CD8-positive, alpha-beta memory T cell (primary cell): ENCODE measurements at regions of chr17 and their contacts with region 1.

Region 1: GRCh38 chr17:48878918-48879898 is 13.4 kb upstream of the ATP5MC1 start:
- DNase-seq: peak; percentile 28 to 72 (median 59)
- H3K4me3 ChIP-seq: no peak overlapping the region
- H3K4me3 Mint-ChIP-seq: no peak overlapping the region
- H3K27ac ChIP-seq: no peak overlapping the region
- H3K27ac Mint-ChIP-seq: no peak overlapping the region
- H3K4me1 ChIP-seq: no peaks in the 10 kb centered on the region
- H3K4me1 Mint-ChIP-seq: peaks cover 0 to 7% (median 3%) of the 10 kb centered on the region in 3 donors
- H3K27me3 ChIP-seq: peaks cover 4% of the 10 kb centered on the region
- H3K27me3 Mint-ChIP-seq: peaks cover 8 to 9% of the 10 kb centered on the region in 2 donors

Region 2: DNA sequence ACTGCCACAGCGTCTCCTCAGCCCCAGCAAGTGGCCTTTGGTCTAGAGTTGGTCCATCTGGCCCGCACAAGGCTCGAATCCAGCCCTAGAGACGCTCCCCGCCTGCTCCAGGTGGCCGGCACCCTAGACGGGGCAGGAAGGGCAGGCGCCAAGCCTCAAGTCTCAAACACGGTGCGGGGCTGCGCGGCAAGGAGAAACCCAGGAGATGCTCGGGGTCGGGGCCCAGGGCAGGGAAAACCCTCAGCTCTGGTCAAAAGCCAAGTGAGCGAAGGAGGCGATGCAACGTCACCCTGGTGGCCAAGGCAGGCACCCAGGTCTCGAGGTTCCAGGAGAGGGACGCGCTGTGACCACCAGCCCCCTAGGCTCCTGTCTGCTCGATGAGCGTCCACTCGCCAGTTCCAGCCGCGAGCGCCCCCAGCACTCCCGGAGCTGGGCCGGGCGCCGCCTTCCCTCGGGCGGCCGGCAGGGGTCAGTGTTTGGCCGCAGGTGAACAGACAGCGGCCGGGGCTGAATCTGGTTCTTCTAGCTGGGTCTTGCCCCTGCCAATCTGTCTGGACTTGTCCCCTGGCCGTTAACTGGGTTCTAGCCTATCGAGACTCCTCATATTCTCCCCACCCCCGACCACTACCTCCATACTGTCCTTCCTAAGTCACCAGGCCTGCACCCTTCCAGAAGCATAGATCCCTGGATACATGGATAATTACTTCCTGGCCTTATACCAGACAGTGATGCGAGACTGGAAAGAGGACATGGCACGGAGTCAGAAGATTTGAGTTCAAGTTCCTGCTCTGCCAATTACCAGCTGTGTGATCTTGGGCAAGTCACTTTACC is 200.9 kb before region 1 on chr17:
- CTCF ChIA-PET with region 1: interaction called, 42 read pairs
- POLR2A ChIA-PET with region 1: interaction called, 3 read pairs
- DNase-seq: peak; percentile 55 to 70 (median 63)
- H3K4me3 ChIP-seq: no peak overlapping the region
- H3K4me3 Mint-ChIP-seq: peak overlapping the region in 4 of 7 donors; percentile 20 to 56 (median 46)
- H3K27ac ChIP-seq: no peak overlapping the region
- H3K27ac Mint-ChIP-seq: peak overlapping the region in 1 of 8 donors; percentile 10
- H3K4me1 ChIP-seq: peaks cover 3% of the 10 kb centered on the region
- H3K4me1 Mint-ChIP-seq: peaks cover 0 to 7% (median 0%) of the 10 kb centered on the region in 3 donors
- H3K27me3 ChIP-seq: peaks cover 9% of the 10 kb centered on the region
- H3K27me3 Mint-ChIP-seq: peaks cover 30 to 45% of the 10 kb centered on the region in 2 donors

Region 3: GRCh38 chr17:48799069-48799723 is 80.0 kb before region 1 on chr17:
- CTCF ChIA-PET with region 1: interaction called, 68 read pairs
- POLR2A ChIA-PET with region 1: interaction called, 11 read pairs
- DNase-seq: no peak
- H3K4me3 ChIP-seq: no peak overlapping the region
- H3K4me3 Mint-ChIP-seq: no peak overlapping the region
- H3K27ac ChIP-seq: no peak overlapping the region
- H3K27ac Mint-ChIP-seq: no peak overlapping the region
- H3K4me1 ChIP-seq: no peaks in the 10 kb centered on the region
- H3K4me1 Mint-ChIP-seq: no peaks in the 10 kb centered on the region
- H3K27me3 ChIP-seq: peaks cover 10% of the 10 kb centered on the region
- H3K27me3 Mint-ChIP-seq: peaks cover 18 to 40% of the 10 kb centered on the region in 2 donors

Region 4: DNA sequence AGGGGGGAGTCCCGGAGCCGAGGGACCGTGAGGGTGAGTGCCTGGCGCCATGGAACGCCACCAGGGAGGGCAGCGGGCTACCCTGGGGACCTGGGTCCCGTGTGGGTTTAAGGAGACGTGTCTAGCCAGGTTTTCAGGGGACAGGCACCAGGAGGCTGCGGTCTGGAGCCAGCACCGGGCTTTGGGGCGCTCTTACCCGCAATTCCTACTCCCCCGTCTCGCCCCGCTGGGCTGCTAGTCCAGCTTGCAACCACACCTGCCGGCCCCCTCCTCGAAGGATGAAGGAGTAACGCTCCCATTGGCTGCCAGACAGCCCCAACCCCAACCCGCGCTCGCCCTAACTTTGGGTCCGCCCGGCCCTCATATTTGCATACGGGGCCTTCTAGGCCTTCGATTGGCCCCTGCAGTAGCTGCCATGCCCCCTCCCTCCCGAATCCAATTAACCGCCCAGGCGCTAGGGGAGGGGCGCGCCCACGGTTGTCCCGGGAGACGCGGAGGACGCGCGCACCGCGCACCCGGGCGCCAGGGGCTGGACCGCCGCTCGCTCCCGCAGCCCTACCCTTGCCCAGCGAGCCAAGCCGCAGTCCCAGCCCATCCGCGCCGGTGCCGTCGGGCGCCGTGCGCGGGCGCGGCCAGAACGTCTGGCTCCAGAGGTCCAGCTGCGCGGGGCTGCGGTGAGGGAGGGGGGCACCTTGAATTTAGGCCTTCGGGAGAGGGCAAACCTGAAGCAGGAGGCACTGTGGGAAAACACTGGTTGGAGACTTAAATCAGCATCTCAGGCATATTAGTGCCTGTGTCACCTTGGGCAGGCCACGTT is 62.2 kb before region 1 on chr17 and contains the start of gene TTLL6:
- CTCF ChIA-PET with region 1: interaction called, 214 read pairs
- POLR2A ChIA-PET with region 1: interaction called, 3 read pairs
- DNase-seq: peak; percentile 67 to 85 (median 75)
- H3K4me3 ChIP-seq: peak within 1 kb of the TSS; percentile 69
- H3K4me3 Mint-ChIP-seq: peak within 1 kb of the TSS; percentile 29 to 89 (median 76)
- H3K27ac ChIP-seq: no peak within 1 kb of the TSS
- H3K27ac Mint-ChIP-seq: peak within 1 kb of the TSS in 3 of 8 donors; percentile 63 to 90 (median 68)
- H3K4me1 ChIP-seq: peaks cover 13% of the 10 kb centered on the region
- H3K4me1 Mint-ChIP-seq: peaks cover 13 to 24% (median 14%) of the 10 kb centered on the region in 3 donors
- H3K27me3 ChIP-seq: peaks cover 20% of the 10 kb centered on the region
- H3K27me3 Mint-ChIP-seq: peaks cover 30 to 60% of the 10 kb centered on the region in 2 donors
- total RNA-seq, gene TTLL6: not detected

Region 5: GRCh38 chr17:48892940-48893645 is 13.9 kb after region 1 on chr17:
- CTCF ChIA-PET with region 1: interaction called, 15 read pairs
- POLR2A ChIA-PET with region 1: no interaction called
- DNase-seq: peak in 1 of 5 donors; percentile 52
- H3K4me3 ChIP-seq: peak overlapping the region; percentile 71
- H3K4me3 Mint-ChIP-seq: peak overlapping the region; percentile 77 to 94 (median 92)
- H3K27ac ChIP-seq: peak overlapping the region; percentile 84
- H3K27ac Mint-ChIP-seq: peak overlapping the region; percentile 85 to 99 (median 98)
- H3K4me1 ChIP-seq: peaks cover 20% of the 10 kb centered on the region
- H3K4me1 Mint-ChIP-seq: peaks cover 24 to 31% (median 29%) of the 10 kb centered on the region in 3 donors
- H3K27me3 ChIP-seq: no peaks in the 10 kb centered on the region
- H3K27me3 Mint-ChIP-seq: no peaks in the 10 kb centered on the region

Region 6: DNA sequence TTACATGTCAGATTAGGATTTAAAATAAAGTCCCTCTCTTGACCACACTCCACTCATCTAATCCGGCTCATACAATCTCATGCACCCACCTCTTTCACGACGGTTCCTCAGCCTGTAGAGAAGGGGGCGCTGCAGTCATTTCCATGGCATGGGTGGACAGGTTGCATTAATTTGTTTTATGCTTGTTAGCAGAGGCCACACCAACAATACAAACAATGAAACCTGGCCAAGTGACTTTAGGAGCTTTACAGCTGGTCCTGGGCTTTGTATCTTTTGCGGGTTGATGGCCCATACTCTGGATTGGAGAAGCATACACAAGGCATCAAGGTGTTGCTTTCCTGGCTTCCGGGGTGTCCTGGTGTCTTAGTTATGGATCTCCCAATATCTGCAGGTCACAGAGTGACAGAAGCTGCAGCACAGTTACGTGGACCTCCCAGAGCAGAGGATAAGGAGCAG is 75.1 kb after region 1 on chr17:
- CTCF ChIA-PET with region 1: no interaction called
- POLR2A ChIA-PET with region 1: no interaction called
- DNase-seq: no peak
- H3K4me3 ChIP-seq: no peak overlapping the region
- H3K4me3 Mint-ChIP-seq: no peak overlapping the region
- H3K27ac ChIP-seq: no peak overlapping the region
- H3K27ac Mint-ChIP-seq: no peak overlapping the region
- H3K4me1 ChIP-seq: no peaks in the 10 kb centered on the region
- H3K4me1 Mint-ChIP-seq: peaks cover 6% of the 10 kb centered on the region in 3 donors
- H3K27me3 ChIP-seq: peaks cover 2% of the 10 kb centered on the region
- H3K27me3 Mint-ChIP-seq: peaks cover 11 to 31% of the 10 kb centered on the region in 2 donors

Region 7: DNA sequence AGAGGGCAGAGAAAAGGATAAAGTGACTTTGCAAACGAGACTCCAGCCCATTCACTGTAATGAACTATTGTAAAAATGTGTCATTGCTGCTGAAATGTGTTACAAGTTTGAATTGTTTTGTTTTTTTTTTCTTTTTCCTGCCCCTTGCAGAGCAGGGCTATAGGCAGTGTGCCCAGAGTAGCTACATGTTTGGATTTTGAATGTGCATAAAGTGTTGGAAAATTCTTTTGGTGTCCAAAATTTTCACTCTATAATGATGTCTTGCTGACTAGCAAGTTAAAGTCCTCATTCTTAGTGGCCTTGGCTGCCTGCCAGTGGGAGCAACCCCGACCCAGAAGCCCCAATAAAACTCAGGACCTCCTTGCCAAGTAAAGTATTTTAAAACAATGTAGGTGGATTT is 184.4 kb after region 1 on chr17:
- CTCF ChIA-PET with region 1: no interaction called
- POLR2A ChIA-PET with region 1: no interaction called
- DNase-seq: no peak
- H3K4me3 ChIP-seq: no peak overlapping the region
- H3K4me3 Mint-ChIP-seq: no peak overlapping the region
- H3K27ac ChIP-seq: no peak overlapping the region
- H3K27ac Mint-ChIP-seq: no peak overlapping the region
- H3K4me1 ChIP-seq: no peaks in the 10 kb centered on the region
- H3K4me1 Mint-ChIP-seq: no peaks in the 10 kb centered on the region
- H3K27me3 ChIP-seq: no peaks in the 10 kb centered on the region
- H3K27me3 Mint-ChIP-seq: peaks cover 3 to 9% of the 10 kb centered on the region in 2 donors